CD8-positive, alpha-beta T cell (primary cell): ENCODE measurements at regions of chr1 and their contacts with region 1.

Region 1: DNA sequence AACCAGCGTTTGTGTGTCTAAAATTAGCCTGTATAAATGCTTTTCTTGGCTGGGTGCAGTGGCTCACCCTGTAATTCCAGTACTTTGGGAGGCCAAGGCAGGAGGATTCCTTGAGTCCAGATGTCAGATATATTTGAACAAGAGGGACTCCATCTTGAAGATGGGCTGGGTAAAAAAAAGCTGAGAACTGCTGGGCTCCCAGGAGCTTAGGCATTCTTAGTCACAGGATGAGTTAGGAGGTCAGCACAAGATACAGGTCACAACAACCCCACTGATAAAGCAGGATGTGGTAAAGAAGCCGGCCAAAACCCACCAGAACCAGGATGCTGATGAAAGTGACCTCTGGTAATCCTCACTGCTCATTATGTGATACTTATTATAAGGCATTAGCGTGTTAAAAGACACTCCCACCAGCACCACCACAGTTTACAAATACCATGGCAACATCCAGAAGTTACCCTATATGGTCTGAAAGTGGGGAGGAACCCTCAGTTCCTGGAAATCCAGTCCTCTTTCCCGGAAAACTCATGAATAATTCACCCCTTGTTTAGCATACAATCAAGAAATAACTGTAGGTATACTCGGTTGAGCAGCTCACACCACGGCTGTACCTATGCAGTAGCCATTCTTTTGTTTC is 36.2 kb upstream of the ZNF496 start:
- DNase-seq: no peak
- ATAC-seq: no peak
- H3K4me3 ChIP-seq: no peak overlapping the region
- H3K4me3 Mint-ChIP-seq: no peak overlapping the region
- H3K27ac ChIP-seq: no peak overlapping the region
- H3K27ac Mint-ChIP-seq: no peak overlapping the region
- H3K4me1 ChIP-seq: no peaks in the 10 kb centered on the region
- H3K4me1 Mint-ChIP-seq: peaks cover 2% of the 10 kb centered on the region
- H3K27me3 ChIP-seq: no peaks in the 10 kb centered on the region
- H3K27me3 Mint-ChIP-seq: peaks cover 32% of the 10 kb centered on the region
- CTCF ChIP-seq: no peak

Region 2: DNA sequence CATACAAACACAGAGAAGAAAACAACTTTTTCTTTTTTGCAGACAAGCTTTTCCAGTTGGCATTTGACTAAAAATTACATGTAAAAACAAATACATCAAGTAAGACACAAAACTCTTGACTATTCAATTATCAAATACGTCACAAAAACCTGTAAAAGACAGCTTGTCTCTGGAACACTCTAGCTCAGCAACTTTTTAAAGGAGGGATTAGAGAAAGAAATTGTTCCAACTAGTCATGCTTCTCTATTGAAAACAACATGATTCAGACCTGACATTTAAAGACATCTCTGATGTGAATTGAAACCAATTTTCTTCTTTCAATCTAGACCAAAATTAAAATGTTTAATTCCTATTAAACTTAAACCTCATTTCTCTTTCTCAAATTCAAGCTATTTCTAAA is 891.1 kb before region 1 on chr1:
- CTCF ChIA-PET with region 1: no interaction called
- POLR2A ChIA-PET with region 1: no interaction called
- intact Hi-C with region 1: no loop called
- DNase-seq: no peak
- ATAC-seq: no peak
- H3K4me3 ChIP-seq: no peak overlapping the region
- H3K4me3 Mint-ChIP-seq: no peak overlapping the region
- H3K27ac ChIP-seq: no peak overlapping the region
- H3K27ac Mint-ChIP-seq: no peak overlapping the region
- H3K4me1 ChIP-seq: no peaks in the 10 kb centered on the region
- H3K4me1 Mint-ChIP-seq: peaks cover 10% of the 10 kb centered on the region
- H3K27me3 ChIP-seq: no peaks in the 10 kb centered on the region
- H3K27me3 Mint-ChIP-seq: no peaks in the 10 kb centered on the region
- CTCF ChIP-seq: no peak

Region 3: GRCh38 chr1:247111700-247112478 is 256.0 kb before region 1 on chr1:
- CTCF ChIA-PET with region 1: no interaction called
- POLR2A ChIA-PET with region 1: no interaction called
- intact Hi-C with region 1: loop called in 1 of 2 experiments (anchors 5 kb)
- DNase-seq: peak in 1 of 9 experiments; percentile 15
- ATAC-seq: peak; percentile 51
- H3K4me3 ChIP-seq: peak overlapping the region; percentile 33 to 46
- H3K4me3 Mint-ChIP-seq: peak overlapping the region; percentile 49
- H3K27ac ChIP-seq: no peak overlapping the region
- H3K27ac Mint-ChIP-seq: no peak overlapping the region
- H3K4me1 ChIP-seq: peaks cover 9% of the 10 kb centered on the region
- H3K4me1 Mint-ChIP-seq: peaks cover 8% of the 10 kb centered on the region
- H3K27me3 ChIP-seq: peaks cover 6 to 18% of the 10 kb centered on the region in 2 experiments
- H3K27me3 Mint-ChIP-seq: peaks cover 42% of the 10 kb centered on the region
- CTCF ChIP-seq: no peak

Region 4: GRCh38 chr1:247448107-247448791 is 80.3 kb after region 1 on chr1:
- CTCF ChIA-PET with region 1: no interaction called
- POLR2A ChIA-PET with region 1: no interaction called
- intact Hi-C with region 1: no loop called
- DNase-seq: peak in 7 of 9 experiments; percentile 4 to 56 (median 27)
- ATAC-seq: no peak
- H3K4me3 ChIP-seq: peak overlapping the region in 1 of 2 experiments; percentile 33
- H3K4me3 Mint-ChIP-seq: peak overlapping the region; percentile 15
- H3K27ac ChIP-seq: no peak overlapping the region
- H3K27ac Mint-ChIP-seq: no peak overlapping the region
- H3K4me1 ChIP-seq: no peaks in the 10 kb centered on the region
- H3K4me1 Mint-ChIP-seq: peaks cover 6% of the 10 kb centered on the region
- H3K27me3 ChIP-seq: no peaks in the 10 kb centered on the region
- H3K27me3 Mint-ChIP-seq: no peaks in the 10 kb centered on the region
- CTCF ChIP-seq: no peak

Region 5: DNA sequence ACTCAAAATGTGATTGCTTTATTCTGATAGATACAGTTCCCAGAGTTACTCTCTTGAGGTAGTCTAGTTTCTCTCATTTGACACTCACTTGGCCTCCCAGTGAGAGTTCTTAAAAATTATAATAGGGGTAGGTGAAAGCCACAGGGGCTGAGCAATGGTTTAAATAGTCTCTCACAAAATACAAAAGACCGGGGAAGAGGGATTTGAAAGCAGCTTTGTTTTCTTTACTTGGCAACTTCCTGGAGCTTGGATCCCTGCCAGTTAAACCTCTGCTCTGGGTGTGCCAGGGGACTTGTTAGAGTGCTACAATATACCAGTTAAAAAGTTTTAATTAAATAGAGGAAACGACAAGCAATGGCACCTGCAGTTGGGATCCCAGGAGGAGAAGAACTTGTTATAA is 280.0 kb after region 1 on chr1:
- CTCF ChIA-PET with region 1: no interaction called
- POLR2A ChIA-PET with region 1: no interaction called
- intact Hi-C with region 1: no loop called
- DNase-seq: no peak
- ATAC-seq: no peak
- H3K4me3 ChIP-seq: no peak overlapping the region
- H3K4me3 Mint-ChIP-seq: no peak overlapping the region
- H3K27ac ChIP-seq: no peak overlapping the region
- H3K27ac Mint-ChIP-seq: no peak overlapping the region
- H3K4me1 ChIP-seq: no peaks in the 10 kb centered on the region
- H3K4me1 Mint-ChIP-seq: no peaks in the 10 kb centered on the region
- H3K27me3 ChIP-seq: no peaks in the 10 kb centered on the region
- H3K27me3 Mint-ChIP-seq: peaks cover 8% of the 10 kb centered on the region
- CTCF ChIP-seq: no peak

Region 6: GRCh38 chr1:248324468-248324867 is 956.6 kb after region 1 on chr1 and contains the start of gene OR2M7:
- CTCF ChIA-PET with region 1: no interaction called
- POLR2A ChIA-PET with region 1: no interaction called
- intact Hi-C with region 1: no loop called
- DNase-seq: no peak
- ATAC-seq: no peak
- H3K4me3 ChIP-seq: no peak within 1 kb of the TSS
- H3K4me3 Mint-ChIP-seq: no peak within 1 kb of the TSS
- H3K27ac ChIP-seq: no peak within 1 kb of the TSS
- H3K27ac Mint-ChIP-seq: no peak within 1 kb of the TSS
- H3K4me1 ChIP-seq: no peaks in the 10 kb centered on the region
- H3K4me1 Mint-ChIP-seq: no peaks in the 10 kb centered on the region
- H3K27me3 ChIP-seq: no peaks in the 10 kb centered on the region
- H3K27me3 Mint-ChIP-seq: no peaks in the 10 kb centered on the region
- CTCF ChIP-seq: no peak
- total RNA-seq, gene OR2M7: not detected